CD4-positive, alpha-beta T cell (primary cell): ENCODE measurements at regions of chr1 and their contacts with region 1.

Region 1: DNA sequence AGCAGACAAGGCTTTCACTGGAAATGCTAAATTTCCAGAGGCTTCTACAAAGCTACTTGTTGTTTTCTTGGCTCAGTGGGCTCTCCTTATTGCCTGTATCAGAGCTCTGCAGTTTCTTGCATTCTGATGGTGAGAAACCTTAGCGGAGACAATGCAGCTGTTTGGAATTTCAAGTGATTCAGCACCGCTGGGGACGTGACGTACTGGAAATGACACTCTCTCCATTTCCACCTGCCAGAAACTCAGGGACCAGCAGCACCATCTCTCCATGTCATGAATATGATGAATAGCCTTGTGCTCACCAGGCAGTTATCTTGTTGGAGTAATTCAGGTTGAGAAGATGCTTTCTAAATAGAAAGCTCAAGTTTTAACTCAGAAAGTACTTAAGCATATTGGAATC is 497.2 kb upstream of the DEPDC1 start:
- DNase-seq: no peak
- ATAC-seq: no peak
- H3K4me3 ChIP-seq: no peak overlapping the region
- H3K4me3 Mint-ChIP-seq: no peak overlapping the region
- H3K27ac ChIP-seq: no peak overlapping the region
- H3K27ac Mint-ChIP-seq: no peak overlapping the region
- H3K4me1 ChIP-seq: no peaks in the 10 kb centered on the region
- H3K4me1 Mint-ChIP-seq: no peaks in the 10 kb centered on the region
- H3K27me3 ChIP-seq: no peaks in the 10 kb centered on the region
- H3K27me3 Mint-ChIP-seq: no peaks in the 10 kb centered on the region
- CTCF ChIP-seq: no peak

Region 2: GRCh38 chr1:69016468-69016867 is 22.4 kb after region 1 on chr1:
- CTCF ChIA-PET with region 1: no interaction called
- POLR2A ChIA-PET with region 1: no interaction called
- intact Hi-C with region 1: loop called in 1 of 2 experiments (anchors 2 kb)
- DNase-seq: no peak
- ATAC-seq: no peak
- H3K4me3 ChIP-seq: no peak overlapping the region
- H3K4me3 Mint-ChIP-seq: no peak overlapping the region
- H3K27ac ChIP-seq: no peak overlapping the region
- H3K27ac Mint-ChIP-seq: no peak overlapping the region
- H3K4me1 ChIP-seq: no peaks in the 10 kb centered on the region
- H3K4me1 Mint-ChIP-seq: no peaks in the 10 kb centered on the region
- H3K27me3 ChIP-seq: no peaks in the 10 kb centered on the region
- H3K27me3 Mint-ChIP-seq: no peaks in the 10 kb centered on the region
- CTCF ChIP-seq: no peak